CD4-positive, alpha-beta memory T cell (primary cell): ENCODE measurements at regions of chr7 and their contacts with region 1.

Region 1: DNA sequence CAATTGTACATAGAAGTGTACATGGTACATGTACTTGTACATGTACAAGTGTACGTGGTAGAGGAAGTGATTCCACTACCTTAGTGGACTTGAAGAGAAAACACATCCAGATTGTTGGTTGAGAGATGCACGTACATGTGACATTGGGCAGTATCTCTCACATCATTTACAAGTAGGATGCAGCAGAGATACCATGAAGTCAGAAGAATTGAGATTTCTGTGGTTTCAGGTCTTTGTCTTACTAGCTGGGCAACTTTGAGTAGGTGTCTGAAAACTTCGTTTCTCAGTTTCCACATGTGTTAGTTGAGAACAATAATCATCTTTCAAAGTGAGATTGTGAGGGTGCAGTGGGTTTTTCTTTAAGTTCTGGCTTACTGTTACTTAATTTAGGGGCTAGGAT is 21.5 kb downstream of the CLDN12 start:
- DNase-seq: no peak
- H3K4me3 ChIP-seq: no peak overlapping the region
- H3K4me3 Mint-ChIP-seq: no peak overlapping the region
- H3K27ac ChIP-seq: no peak overlapping the region
- H3K27ac Mint-ChIP-seq: peak overlapping the region in 1 of 7 donors; percentile 25
- H3K4me1 ChIP-seq: no peaks in the 10 kb centered on the region
- H3K4me1 Mint-ChIP-seq: peaks cover 2 to 9% (median 3%) of the 10 kb centered on the region in 4 donors
- H3K27me3 ChIP-seq: no peaks in the 10 kb centered on the region
- H3K27me3 Mint-ChIP-seq: peaks cover 2 to 3% of the 10 kb centered on the region in 2 donors

Region 2: GRCh38 chr7:88546808-88547207 is 1877.9 kb before region 1 on chr7:
- CTCF ChIA-PET with region 1: no interaction called
- POLR2A ChIA-PET with region 1: no interaction called
- intact Hi-C with region 1: loop called (anchors 5 kb)
- DNase-seq: peak in 3 of 5 donors; percentile 2 to 9 (median 6)
- H3K4me3 ChIP-seq: no peak overlapping the region
- H3K4me3 Mint-ChIP-seq: no peak overlapping the region
- H3K27ac ChIP-seq: no peak overlapping the region
- H3K27ac Mint-ChIP-seq: no peak overlapping the region
- H3K4me1 ChIP-seq: no peaks in the 10 kb centered on the region
- H3K4me1 Mint-ChIP-seq: no peaks in the 10 kb centered on the region
- H3K27me3 ChIP-seq: no peaks in the 10 kb centered on the region
- H3K27me3 Mint-ChIP-seq: no peaks in the 10 kb centered on the region

Region 3: GRCh38 chr7:90312745-90313144 is 112.0 kb before region 1 on chr7:
- CTCF ChIA-PET with region 1: interaction called, 34 read pairs
- POLR2A ChIA-PET with region 1: no interaction called
- intact Hi-C with region 1: loop called (anchors 1 kb)
- DNase-seq: no peak
- H3K4me3 ChIP-seq: no peak overlapping the region
- H3K4me3 Mint-ChIP-seq: no peak overlapping the region
- H3K27ac ChIP-seq: no peak overlapping the region
- H3K27ac Mint-ChIP-seq: no peak overlapping the region
- H3K4me1 ChIP-seq: no peaks in the 10 kb centered on the region
- H3K4me1 Mint-ChIP-seq: no peaks in the 10 kb centered on the region
- H3K27me3 ChIP-seq: no peaks in the 10 kb centered on the region
- H3K27me3 Mint-ChIP-seq: peaks cover 8 to 11% of the 10 kb centered on the region in 2 donors

Region 4: GRCh38 chr7:90445633-90446032 is 20.9 kb after region 1 on chr7:
- CTCF ChIA-PET with region 1: interaction called, 20 read pairs
- POLR2A ChIA-PET with region 1: no interaction called
- intact Hi-C with region 1: no loop called
- DNase-seq: no peak
- H3K4me3 ChIP-seq: no peak overlapping the region
- H3K4me3 Mint-ChIP-seq: no peak overlapping the region
- H3K27ac ChIP-seq: no peak overlapping the region
- H3K27ac Mint-ChIP-seq: no peak overlapping the region
- H3K4me1 ChIP-seq: no peaks in the 10 kb centered on the region
- H3K4me1 Mint-ChIP-seq: no peaks in the 10 kb centered on the region
- H3K27me3 ChIP-seq: no peaks in the 10 kb centered on the region
- H3K27me3 Mint-ChIP-seq: peaks cover 2 to 3% of the 10 kb centered on the region in 2 donors

Region 5: DNA sequence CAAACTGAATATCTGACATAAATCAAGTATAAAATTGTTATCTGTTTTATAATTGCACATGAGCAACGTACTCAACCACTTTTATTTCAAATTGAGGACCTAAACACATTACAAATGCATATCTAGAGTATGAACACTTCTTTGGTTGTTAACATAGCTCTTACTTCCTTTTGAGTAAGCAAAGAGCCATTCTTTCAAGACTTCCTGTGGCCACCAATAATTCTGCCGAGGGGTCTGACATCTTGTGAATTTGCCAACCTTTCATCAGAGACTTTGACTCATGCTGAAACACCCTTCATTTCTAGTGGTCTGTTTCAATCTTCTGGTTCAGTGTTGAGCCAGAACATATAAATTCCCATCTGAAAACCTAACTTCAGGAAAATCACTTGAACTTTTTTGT is 230.8 kb after region 1 on chr7:
- CTCF ChIA-PET with region 1: no interaction called
- POLR2A ChIA-PET with region 1: no interaction called
- intact Hi-C with region 1: no loop called
- DNase-seq: no peak
- H3K4me3 ChIP-seq: no peak overlapping the region
- H3K4me3 Mint-ChIP-seq: no peak overlapping the region
- H3K27ac ChIP-seq: no peak overlapping the region
- H3K27ac Mint-ChIP-seq: no peak overlapping the region
- H3K4me1 ChIP-seq: no peaks in the 10 kb centered on the region
- H3K4me1 Mint-ChIP-seq: no peaks in the 10 kb centered on the region
- H3K27me3 ChIP-seq: no peaks in the 10 kb centered on the region
- H3K27me3 Mint-ChIP-seq: peaks cover 0 to 2% of the 10 kb centered on the region in 2 donors